ENCODE measurements at regions of chr2 and their contacts with region 1.

Region 1: DNA sequence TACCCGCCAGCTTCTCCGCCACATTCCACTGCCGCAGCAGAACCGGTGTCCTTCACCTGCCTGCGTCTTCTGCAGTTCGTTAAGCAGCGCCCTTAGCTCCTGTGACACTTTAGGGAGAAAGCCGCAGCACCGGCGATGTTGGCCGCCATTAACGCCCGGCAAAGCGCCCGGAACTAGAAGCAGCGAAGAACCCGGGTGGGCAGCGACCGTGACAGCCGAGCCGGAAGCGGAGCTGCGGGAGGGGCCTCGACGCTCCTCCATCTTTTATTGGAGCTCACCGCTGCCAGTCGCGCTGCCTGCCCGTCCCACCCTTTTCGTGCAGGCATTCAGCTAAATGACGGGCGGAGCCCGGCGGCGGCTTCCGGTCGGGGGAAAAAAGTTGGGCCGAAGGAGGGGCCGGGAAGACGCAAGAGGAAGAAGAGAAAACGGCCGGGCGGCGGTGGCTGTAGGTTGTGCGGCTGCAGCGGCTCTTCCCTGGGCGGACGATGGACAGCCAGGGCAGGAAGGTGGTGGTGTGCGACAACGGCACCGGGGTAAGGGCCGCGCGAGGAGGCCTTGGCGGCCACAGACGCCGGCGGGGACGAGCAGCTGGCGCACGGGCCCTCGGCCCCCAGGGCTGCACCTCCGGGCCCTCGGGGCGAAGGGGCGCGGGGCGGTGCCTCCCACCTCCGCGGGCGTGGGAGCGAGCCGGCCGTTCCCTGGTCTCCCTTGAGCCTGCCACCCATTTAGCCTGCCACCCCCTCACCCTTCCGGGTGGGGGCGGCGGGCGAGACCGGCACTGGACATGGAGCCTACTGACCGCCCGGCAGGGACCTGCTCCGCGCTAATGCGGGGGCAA is at the start of gene ACTR2:
- DNase-seq: peak; percentile 98
- H3K4me3 ChIP-seq: peak within 1 kb of the TSS; percentile 93
- H3K27ac ChIP-seq: peak within 1 kb of the TSS; percentile 94
- H3K4me1 ChIP-seq: peaks cover 24% of the 10 kb centered on the region
- H3K27me3 ChIP-seq: no peaks in the 10 kb centered on the region
- CTCF ChIP-seq: no peak
- total RNA-seq, gene ACTR2: 235 and 253 TPM in 2 replicates

Region 2: DNA sequence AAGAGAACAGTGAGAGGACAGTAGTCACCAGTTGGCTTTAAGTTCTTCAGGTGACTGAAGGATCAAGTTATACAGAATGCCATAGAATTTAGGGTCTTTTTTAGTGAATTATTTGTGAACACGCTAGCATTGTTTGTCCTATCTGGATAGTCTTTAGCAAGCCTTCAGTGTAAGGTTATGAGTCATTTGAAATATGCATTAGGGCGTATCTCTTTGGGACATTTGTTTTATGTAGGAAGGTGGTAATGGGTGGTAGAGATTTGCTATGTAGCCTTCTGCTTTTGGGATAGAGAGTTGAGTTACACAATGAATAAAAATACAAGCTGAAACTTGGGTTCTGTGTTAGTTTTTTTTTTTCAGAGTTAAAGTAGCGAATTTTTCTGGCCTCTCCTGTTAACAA is 13.0 kb after region 1 on chr2:
- CTCF ChIA-PET with region 1: no interaction called
- POLR2A ChIA-PET with region 1: interaction called, 18 read pairs
- intact Hi-C with region 1: no loop called
- DNase-seq: no peak
- H3K4me3 ChIP-seq: no peak overlapping the region
- H3K27ac ChIP-seq: no peak overlapping the region
- H3K4me1 ChIP-seq: no peaks in the 10 kb centered on the region
- H3K27me3 ChIP-seq: no peaks in the 10 kb centered on the region
- CTCF ChIP-seq: no peak

Region 3: GRCh38 chr2:65409045-65409444 is 181.4 kb after region 1 on chr2:
- CTCF ChIA-PET with region 1: no interaction called
- POLR2A ChIA-PET with region 1: interaction called, 14 read pairs
- intact Hi-C with region 1: no loop called
- DNase-seq: no peak
- H3K4me3 ChIP-seq: no peak overlapping the region
- H3K27ac ChIP-seq: no peak overlapping the region
- H3K4me1 ChIP-seq: peaks cover 34% of the 10 kb centered on the region
- H3K27me3 ChIP-seq: no peaks in the 10 kb centered on the region
- CTCF ChIP-seq: no peak

Region 4: DNA sequence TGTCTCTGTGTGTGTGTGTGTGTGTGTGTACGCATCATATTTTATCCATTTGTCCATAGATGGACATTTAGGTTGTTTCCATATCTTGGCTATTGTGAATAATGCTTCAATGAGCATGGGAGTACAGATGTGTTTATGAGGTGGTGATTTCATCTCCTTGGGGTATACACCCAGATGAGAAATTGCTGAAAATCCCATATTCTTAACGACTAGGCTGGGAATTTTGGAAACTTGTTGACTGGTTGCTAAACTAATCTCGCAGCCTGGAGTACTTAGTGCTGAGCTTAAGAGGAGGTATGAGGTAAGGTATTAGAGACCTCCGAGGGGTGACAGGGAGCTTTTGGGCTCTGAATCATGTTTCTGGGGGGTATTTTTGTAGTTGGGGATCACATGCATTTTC is 270.8 kb after region 1 on chr2:
- CTCF ChIA-PET with region 1: no interaction called
- POLR2A ChIA-PET with region 1: interaction called, 20 read pairs
- intact Hi-C with region 1: no loop called
- DNase-seq: no peak
- H3K4me3 ChIP-seq: no peak overlapping the region
- H3K27ac ChIP-seq: no peak overlapping the region
- H3K4me1 ChIP-seq: no peaks in the 10 kb centered on the region
- H3K27me3 ChIP-seq: no peaks in the 10 kb centered on the region
- CTCF ChIP-seq: no peak